Endothelial cell of umbilical vein (primary cell): ENCODE measurements at regions of chr5 and their contacts with region 1.

Region 1: DNA sequence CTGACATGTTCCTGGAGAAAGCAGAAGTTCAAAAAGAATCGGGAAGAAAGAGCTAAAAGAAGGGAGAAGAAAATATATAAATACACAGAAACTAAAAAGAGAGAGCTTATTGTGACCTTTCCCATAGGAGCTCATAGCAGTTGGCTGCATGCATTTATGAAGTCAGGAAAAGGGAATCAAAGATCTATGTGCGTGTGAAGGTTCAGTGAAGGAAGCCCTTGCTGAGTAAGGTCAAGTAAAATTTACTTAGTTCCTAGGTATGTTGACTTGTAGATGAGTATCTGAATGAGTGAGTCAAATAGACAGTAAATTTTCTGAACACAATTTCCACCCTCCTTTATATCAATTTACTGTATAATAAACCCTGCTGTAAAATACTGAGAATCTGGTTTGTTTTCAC is 632.5 kb downstream of the SLCO4C1 start:
- DNase-seq: no peak
- H3K4me3 ChIP-seq: no peak overlapping the region
- H3K27ac ChIP-seq: no peak overlapping the region
- H3K4me1 ChIP-seq: no peaks in the 10 kb centered on the region
- H3K27me3 ChIP-seq: no peaks in the 10 kb centered on the region
- CTCF ChIP-seq: no peak
- POLR2A ChIP-seq: no peak

Region 2: GRCh38 chr5:101678481-101679193 is 15.1 kb after region 1 on chr5:
- CTCF ChIA-PET with region 1: interaction called, 12 read pairs
- POLR2A ChIA-PET with region 1: no interaction called
- dilution Hi-C with region 1: no loop called
- intact Hi-C with region 1: no loop called
- DNase-seq: peak; percentile 71
- H3K4me3 ChIP-seq: no peak overlapping the region
- H3K27ac ChIP-seq: no peak overlapping the region
- H3K4me1 ChIP-seq: no peaks in the 10 kb centered on the region
- H3K27me3 ChIP-seq: no peaks in the 10 kb centered on the region
- CTCF ChIP-seq: peak; percentile 82 to 93
- POLR2A ChIP-seq: no peak